Heart right ventricle (tissue), 16 donors: ENCODE measurements at regions of chr13 and their contacts with region 1.

Region 1: DNA sequence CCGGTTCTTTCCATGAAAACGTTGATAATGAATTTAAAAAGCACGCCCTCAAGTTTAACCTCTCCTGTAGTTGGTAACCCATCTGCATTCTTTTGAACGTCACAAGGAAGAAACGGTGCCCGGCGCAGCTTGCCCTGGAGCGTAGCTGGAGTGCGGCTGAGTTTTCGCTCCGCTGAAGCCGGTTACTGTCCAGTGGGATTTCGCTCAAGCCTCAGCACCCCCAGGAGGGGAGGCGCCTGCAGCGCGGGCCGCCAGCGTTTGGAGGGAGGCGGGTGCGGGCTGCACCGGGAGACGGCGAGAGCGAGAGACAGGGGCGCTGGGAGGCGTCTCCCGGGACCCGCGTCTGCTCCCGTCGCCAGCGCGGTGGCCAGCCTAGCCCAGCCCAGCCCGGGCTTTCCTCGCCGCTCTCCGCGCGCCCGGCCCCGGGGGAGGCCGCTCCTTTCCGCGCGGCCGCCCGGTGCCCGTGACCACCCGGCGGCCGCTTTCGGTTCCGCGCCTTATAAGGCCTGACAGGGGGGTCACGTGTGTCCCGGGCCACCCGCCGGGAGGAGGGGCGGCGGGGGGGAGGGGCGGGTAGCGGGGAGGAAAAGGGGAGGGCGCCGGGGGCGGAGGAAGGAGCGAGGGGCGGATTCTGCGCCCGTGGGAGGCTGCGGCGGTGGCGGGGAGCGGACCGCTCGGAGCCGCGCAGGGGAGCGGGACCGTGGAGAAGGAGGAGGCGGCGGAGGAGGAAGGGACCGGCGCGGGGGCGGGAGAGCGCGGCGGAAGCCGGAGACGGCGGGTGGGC is 8.3 kb upstream of the DGKH start:
- DNase-seq: peak; percentile 94 to 95
- ATAC-seq: peak; percentile 90 to 96 (median 94)
- H3K4me3 ChIP-seq: peak overlapping the region; percentile 28 to 96 (median 90)
- H3K27ac ChIP-seq: peak overlapping the region; percentile 94 to 99 (median 97)
- H3K4me1 ChIP-seq: peaks cover 0 to 27% (median 17%) of the 10 kb centered on the region in 9 donors
- H3K27me3 ChIP-seq: no peaks in the 10 kb centered on the region
- CTCF ChIP-seq: peak in 4 of 9 donors; percentile 6 to 24 (median 16)

Region 2: DNA sequence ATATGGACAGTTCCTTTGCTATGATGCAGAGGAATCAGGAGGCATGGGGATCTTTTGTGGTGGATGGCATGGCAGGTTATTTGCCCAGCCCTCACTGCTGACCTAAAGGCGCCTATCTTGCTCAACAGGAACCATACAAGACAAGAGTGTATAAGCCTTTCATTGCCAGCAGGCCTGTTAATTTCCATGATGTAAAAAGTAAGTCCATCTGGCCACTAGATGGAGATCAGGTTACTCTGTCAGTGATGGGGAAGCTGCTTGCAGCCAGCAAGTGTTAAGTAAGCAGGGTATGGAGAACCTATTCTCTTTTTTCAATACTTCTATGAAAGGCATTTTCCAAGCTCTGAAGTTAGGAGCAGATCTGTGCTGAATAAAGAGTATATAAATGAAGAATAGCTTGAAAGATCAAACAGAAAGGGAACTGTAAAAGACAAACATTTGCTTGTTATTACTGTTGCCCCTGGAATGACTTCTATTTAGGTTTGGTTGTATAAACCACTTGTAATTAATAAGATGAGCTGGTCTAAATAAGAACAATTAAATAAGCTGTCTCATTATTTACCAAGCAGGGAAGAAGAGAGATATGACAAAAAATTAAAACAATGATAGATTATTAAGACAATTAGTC is 371.9 kb before region 1 on chr13:
- intact Hi-C with region 1: loop called in 6 of 10 experiments (anchors 5 to 10 kb)
- DNase-seq: peak in 1 of 2 donors; percentile 74
- ATAC-seq: peak; percentile 91 to 98 (median 96)
- H3K4me3 ChIP-seq: no peak overlapping the region
- H3K27ac ChIP-seq: no peak overlapping the region
- H3K4me1 ChIP-seq: peaks cover 0 to 12% (median 4%) of the 10 kb centered on the region in 9 donors
- H3K27me3 ChIP-seq: no peaks in the 10 kb centered on the region
- CTCF ChIP-seq: peak; percentile 69 to 93 (median 83)

Region 3: DNA sequence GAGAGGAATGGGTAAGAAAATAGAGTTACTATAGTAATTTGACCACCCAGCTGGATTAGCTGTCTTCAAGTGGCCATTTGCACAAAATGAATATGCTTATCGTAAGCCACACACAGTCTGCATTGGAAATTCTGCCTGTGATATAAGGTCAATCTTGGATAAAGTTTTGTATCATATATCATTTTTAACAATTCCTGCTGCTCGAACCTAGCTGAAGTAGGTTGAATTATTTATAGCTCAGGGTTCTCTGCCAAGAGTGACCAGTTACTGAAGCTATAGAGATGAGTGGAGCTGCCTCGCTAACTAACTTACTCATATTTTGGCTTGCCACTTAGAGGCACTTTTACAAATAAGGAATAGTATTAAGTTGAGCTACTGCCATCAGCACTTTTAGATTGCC is 361.9 kb before region 1 on chr13:
- intact Hi-C with region 1: loop called in 2 of 10 experiments (anchors 5 to 10 kb)
- DNase-seq: no peak
- ATAC-seq: peak in 5 of 8 donors; percentile 51 to 74 (median 58)
- H3K4me3 ChIP-seq: no peak overlapping the region
- H3K27ac ChIP-seq: peak overlapping the region in 5 of 10 donors; percentile 10 to 59 (median 27)
- H3K4me1 ChIP-seq: peaks cover 0 to 26% (median 7%) of the 10 kb centered on the region in 9 donors
- H3K27me3 ChIP-seq: no peaks in the 10 kb centered on the region
- CTCF ChIP-seq: no peak

Region 4: DNA sequence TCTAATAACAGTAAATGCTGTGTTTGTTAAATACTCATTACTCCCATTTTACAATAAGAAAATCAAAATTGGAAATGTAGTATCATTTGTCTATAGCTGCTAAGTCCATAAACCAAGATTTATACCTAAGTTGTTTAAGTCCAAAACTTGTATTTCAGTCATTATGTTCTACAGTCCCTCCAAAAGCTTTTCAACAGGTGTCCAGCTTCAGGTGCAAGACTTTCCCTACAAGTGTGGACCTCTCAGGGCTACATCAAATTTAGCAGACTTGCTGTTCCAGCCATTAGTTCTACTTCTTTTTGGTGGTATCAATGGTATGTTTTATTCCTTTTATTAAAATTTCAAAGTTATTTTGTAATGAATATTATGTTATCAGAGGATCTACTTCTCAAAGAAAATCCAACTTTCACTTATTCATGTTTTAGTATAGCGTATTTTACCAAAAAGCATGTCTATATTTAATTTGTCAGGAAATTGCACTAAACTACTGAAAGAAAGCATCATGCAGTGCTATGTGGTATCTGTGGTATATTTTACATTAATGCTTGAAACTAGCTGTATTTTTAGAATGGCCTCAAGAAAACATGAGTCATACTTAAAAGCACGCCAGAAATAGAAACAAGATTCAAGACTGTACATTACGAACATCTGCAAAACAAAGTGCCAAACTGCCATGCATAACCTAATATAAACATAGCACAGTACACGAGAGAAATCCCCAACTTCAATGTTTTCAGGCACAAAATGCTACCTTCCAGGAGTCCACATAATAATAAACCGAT is 123.8 kb before region 1 on chr13:
- intact Hi-C with region 1: loop called in 4 of 10 experiments (anchors 5 to 10 kb)
- DNase-seq: no peak
- ATAC-seq: peak in 6 of 8 donors; percentile 18 to 63 (median 54)
- H3K4me3 ChIP-seq: peak overlapping the region in 1 of 10 donors; percentile 2
- H3K27ac ChIP-seq: peak overlapping the region in 8 of 10 donors; percentile 7 to 70 (median 52)
- H3K4me1 ChIP-seq: peaks cover 5 to 68% (median 47%) of the 10 kb centered on the region in 9 donors
- H3K27me3 ChIP-seq: no peaks in the 10 kb centered on the region
- CTCF ChIP-seq: no peak

Region 5: GRCh38 chr13:42071672-42072419 is 31.7 kb after region 1 on chr13:
- intact Hi-C with region 1: no loop called
- DNase-seq: no peak
- ATAC-seq: no peak
- H3K4me3 ChIP-seq: no peak overlapping the region
- H3K27ac ChIP-seq: no peak overlapping the region
- H3K4me1 ChIP-seq: peaks cover 0 to 17% (median 8%) of the 10 kb centered on the region in 9 donors
- H3K27me3 ChIP-seq: no peaks in the 10 kb centered on the region
- CTCF ChIP-seq: no peak

Region 6: GRCh38 chr13:42102961-42103865 is 63.1 kb after region 1 on chr13:
- intact Hi-C with region 1: loop called in 1 of 10 experiments (anchors 10 kb)
- DNase-seq: no peak
- ATAC-seq: no peak
- H3K4me3 ChIP-seq: no peak overlapping the region
- H3K27ac ChIP-seq: no peak overlapping the region
- H3K4me1 ChIP-seq: peaks cover 0 to 34% (median 18%) of the 10 kb centered on the region in 9 donors
- H3K27me3 ChIP-seq: no peaks in the 10 kb centered on the region
- CTCF ChIP-seq: no peak